Activated CD8-positive, alpha-beta T cell treated with anti-CD3 and anti-CD28 coated beads, Interleukin-2, amount 10 ng/mL, durations not matched to agents 7 days and 5 days (primary cell): ENCODE measurements at regions of chr1 and their contacts with region 1.

Region 1: DNA sequence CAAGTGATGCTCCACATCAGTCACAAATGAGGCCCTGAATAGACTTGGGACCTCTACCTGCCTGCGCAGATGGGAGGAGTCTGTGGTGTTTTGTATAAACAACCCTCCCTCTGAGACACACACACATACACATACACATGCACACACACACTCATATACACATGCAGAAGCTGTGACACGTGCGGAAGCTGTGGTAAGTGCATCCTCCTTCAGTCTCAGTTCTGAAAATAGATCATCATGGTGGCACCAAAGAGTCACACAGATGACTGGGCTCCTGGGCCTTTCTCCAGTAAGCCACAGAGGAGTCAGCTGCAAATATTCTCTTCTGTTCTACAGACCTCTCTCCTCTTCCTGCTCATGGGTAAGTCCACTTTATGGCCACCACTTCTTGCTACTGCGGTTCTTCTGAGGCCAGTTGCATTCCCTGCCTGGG is at the start of gene LY9:
- DNase-seq: peak; percentile 89
- ATAC-seq: peak; percentile 85
- H3K4me3 Mint-ChIP-seq: peak within 1 kb of the TSS; percentile 88
- H3K27ac Mint-ChIP-seq: peak within 1 kb of the TSS; percentile 95
- H3K4me1 Mint-ChIP-seq: peaks cover 62% of the 10 kb centered on the region
- H3K27me3 Mint-ChIP-seq: no peaks in the 10 kb centered on the region
- total RNA-seq, gene LY9: 24.7 to 24.9 TPM

Region 2: DNA sequence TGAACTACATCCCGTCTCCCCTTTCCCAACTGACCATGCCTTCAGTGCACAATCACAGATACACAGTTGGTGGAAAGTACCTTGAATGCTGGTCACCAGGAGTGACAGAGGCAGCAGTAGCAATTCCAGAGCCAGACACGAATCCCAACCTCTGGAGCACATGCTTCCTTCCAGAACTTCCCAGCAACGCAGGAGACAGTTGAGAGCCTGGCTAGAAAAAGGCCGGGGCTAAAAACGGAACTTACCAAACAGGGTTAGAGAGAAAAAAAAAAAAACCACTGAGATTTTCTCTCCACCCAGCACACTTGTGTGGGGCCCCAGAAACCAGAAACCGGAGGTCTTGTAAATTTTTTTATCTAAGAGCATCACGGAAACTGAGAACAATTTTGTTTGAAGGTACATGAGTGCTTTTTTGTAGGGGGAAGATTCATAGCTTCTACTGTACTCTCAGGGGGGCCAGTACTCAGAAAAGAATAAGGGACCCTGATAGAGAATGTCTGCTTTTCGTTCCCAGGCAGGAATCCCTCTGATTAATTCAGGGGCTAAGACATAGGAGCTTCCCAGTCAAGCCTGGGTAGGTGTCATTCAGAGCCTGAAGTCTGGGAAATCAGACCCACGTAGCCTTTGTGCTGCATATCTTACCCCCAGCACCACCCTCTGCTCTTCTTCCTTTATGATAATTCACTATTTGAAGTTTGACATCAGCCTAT is 84.2 kb before region 1 on chr1 and contains the start of gene CD48:
- CTCF ChIA-PET with region 1: interaction called, 20 read pairs
- POLR2A ChIA-PET with region 1: interaction called, 17 read pairs
- DNase-seq: peak; percentile 79
- ATAC-seq: peak; percentile 48
- H3K4me3 Mint-ChIP-seq: no peak within 1 kb of the TSS
- H3K27ac Mint-ChIP-seq: no peak within 1 kb of the TSS
- H3K4me1 Mint-ChIP-seq: peaks cover 39% of the 10 kb centered on the region
- H3K27me3 Mint-ChIP-seq: no peaks in the 10 kb centered on the region
- total RNA-seq, gene CD48: 325 to 327 TPM

Region 3: GRCh38 chr1:160777486-160778089 is 18.4 kb before region 1 on chr1:
- CTCF ChIA-PET with region 1: interaction called, 192 read pairs
- POLR2A ChIA-PET with region 1: interaction called, 4 read pairs
- DNase-seq: peak; percentile 66
- ATAC-seq: peak; percentile 76
- H3K4me3 Mint-ChIP-seq: no peak overlapping the region
- H3K27ac Mint-ChIP-seq: peak overlapping the region; percentile 26
- H3K4me1 Mint-ChIP-seq: peaks cover 40% of the 10 kb centered on the region
- H3K27me3 Mint-ChIP-seq: no peaks in the 10 kb centered on the region

Region 4: DNA sequence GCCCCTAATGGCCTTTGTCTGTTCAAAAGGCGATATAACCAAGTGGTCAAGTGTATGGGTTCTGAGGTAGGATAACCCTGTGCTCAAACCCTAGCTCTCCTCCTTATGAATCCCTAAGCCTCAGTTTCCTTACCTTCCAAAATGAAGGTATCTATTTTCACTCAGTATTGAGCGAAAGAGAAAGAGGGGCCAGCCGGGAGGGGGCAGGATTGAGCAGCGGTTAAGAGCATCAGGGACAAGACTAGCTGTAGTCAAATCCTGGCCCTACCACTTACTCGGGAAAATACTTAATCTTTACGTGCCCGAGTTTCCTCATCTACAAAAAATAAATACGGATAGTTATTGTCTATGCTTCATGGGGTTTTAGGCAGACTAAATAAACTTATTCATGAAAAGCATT is 25.7 kb after region 1 on chr1:
- CTCF ChIA-PET with region 1: interaction called, 10 read pairs
- POLR2A ChIA-PET with region 1: interaction called, 3 read pairs
- DNase-seq: no peak
- ATAC-seq: no peak
- H3K4me3 Mint-ChIP-seq: no peak overlapping the region
- H3K27ac Mint-ChIP-seq: no peak overlapping the region
- H3K4me1 Mint-ChIP-seq: peaks cover 4% of the 10 kb centered on the region
- H3K27me3 Mint-ChIP-seq: no peaks in the 10 kb centered on the region

Region 5: GRCh38 chr1:160830321-160831153 is 34.6 kb after region 1 on chr1:
- CTCF ChIA-PET with region 1: interaction called, 98 read pairs
- POLR2A ChIA-PET with region 1: interaction called, 5 read pairs
- DNase-seq: peak; percentile 87
- ATAC-seq: peak; percentile 83
- H3K4me3 Mint-ChIP-seq: no peak overlapping the region
- H3K27ac Mint-ChIP-seq: no peak overlapping the region
- H3K4me1 Mint-ChIP-seq: peaks cover 40% of the 10 kb centered on the region
- H3K27me3 Mint-ChIP-seq: no peaks in the 10 kb centered on the region

Region 6: GRCh38 chr1:160877221-160877620 is 81.3 kb after region 1 on chr1:
- CTCF ChIA-PET with region 1: interaction called, 10 read pairs
- POLR2A ChIA-PET with region 1: no interaction called
- DNase-seq: peak; percentile 52
- ATAC-seq: peak; percentile 90
- H3K4me3 Mint-ChIP-seq: no peak overlapping the region
- H3K27ac Mint-ChIP-seq: peak overlapping the region; percentile 59
- H3K4me1 Mint-ChIP-seq: peaks cover 29% of the 10 kb centered on the region
- H3K27me3 Mint-ChIP-seq: peaks cover 2% of the 10 kb centered on the region

Region 7: GRCh38 chr1:161038523-161039153 is 242.7 kb after region 1 on chr1 and contains the start of gene TSTD1:
- CTCF ChIA-PET with region 1: no interaction called
- POLR2A ChIA-PET with region 1: no interaction called
- DNase-seq: peak; percentile 89
- ATAC-seq: peak; percentile 91
- H3K4me3 Mint-ChIP-seq: peak within 1 kb of the TSS; percentile 91
- H3K27ac Mint-ChIP-seq: peak within 1 kb of the TSS; percentile 94
- H3K4me1 Mint-ChIP-seq: peaks cover 63% of the 10 kb centered on the region
- H3K27me3 Mint-ChIP-seq: no peaks in the 10 kb centered on the region
- total RNA-seq, gene TSTD1: 63.2 to 63.3 TPM